Ascending aorta (tissue), 2 donors: ENCODE measurements at regions of chr11 and their contacts with region 1.

Region 1: GRCh38 chr11:18706330-18707243 is 8.0 kb downstream of the TMEM86A start:
- DNase-seq: peak in 1 of 2 donors; percentile 84
- H3K4me3 ChIP-seq: peak overlapping the region; percentile 48 to 70
- H3K27ac ChIP-seq: peak overlapping the region; percentile 79 to 88
- H3K4me1 ChIP-seq: no peaks in the 10 kb centered on the region
- H3K27me3 ChIP-seq: no peaks in the 10 kb centered on the region
- CTCF ChIP-seq: no peak

Region 2: DNA sequence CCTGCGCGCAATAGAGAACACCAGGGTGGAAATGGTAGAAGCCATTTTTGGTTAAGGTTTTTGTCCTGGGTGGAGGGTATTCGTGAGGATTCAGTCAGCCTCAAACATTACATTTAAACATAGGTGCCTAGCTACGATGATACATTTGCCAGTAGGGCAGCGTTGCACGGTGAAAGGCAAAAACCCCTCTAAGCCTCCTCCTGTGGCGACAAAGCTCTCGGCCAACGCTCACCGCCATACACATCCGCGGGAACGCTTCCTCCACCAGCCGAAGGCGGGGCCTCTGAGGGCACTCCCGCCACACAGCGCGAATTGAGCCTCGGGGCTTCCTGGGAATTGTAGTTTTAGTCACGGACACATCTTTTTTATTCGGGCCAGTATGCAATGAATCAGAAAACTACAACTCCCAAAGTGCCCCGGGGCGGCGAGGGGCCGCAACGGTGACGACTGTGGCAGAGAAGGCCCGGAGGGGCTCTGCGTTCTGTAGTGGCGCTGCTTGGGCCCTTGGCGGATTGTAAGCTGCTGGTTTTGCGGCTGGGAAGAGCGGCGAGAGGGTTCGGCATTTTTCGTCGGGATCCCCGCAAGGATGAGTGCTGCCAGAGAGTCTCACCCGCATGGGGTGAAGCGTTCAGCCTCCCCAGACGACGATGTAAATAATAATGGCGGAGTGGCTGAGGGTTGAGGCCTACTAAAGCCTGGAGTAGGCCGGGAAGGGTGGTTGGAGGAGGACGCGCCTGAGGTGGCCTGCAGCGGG is 1968.2 kb before region 1 on chr11 and contains the start of gene C11orf58:
- intact Hi-C with region 1: loop called (anchors 10 kb)
- DNase-seq: peak; percentile 94 to 98
- H3K4me3 ChIP-seq: peak within 1 kb of the TSS; percentile 93
- H3K27ac ChIP-seq: peak within 1 kb of the TSS; percentile 95
- H3K4me1 ChIP-seq: peaks cover 4 to 16% of the 10 kb centered on the region in 2 donors
- H3K27me3 ChIP-seq: no peaks in the 10 kb centered on the region
- CTCF ChIP-seq: no peak
- total RNA-seq, gene C11orf58: 40.9 TPM

Region 3: DNA sequence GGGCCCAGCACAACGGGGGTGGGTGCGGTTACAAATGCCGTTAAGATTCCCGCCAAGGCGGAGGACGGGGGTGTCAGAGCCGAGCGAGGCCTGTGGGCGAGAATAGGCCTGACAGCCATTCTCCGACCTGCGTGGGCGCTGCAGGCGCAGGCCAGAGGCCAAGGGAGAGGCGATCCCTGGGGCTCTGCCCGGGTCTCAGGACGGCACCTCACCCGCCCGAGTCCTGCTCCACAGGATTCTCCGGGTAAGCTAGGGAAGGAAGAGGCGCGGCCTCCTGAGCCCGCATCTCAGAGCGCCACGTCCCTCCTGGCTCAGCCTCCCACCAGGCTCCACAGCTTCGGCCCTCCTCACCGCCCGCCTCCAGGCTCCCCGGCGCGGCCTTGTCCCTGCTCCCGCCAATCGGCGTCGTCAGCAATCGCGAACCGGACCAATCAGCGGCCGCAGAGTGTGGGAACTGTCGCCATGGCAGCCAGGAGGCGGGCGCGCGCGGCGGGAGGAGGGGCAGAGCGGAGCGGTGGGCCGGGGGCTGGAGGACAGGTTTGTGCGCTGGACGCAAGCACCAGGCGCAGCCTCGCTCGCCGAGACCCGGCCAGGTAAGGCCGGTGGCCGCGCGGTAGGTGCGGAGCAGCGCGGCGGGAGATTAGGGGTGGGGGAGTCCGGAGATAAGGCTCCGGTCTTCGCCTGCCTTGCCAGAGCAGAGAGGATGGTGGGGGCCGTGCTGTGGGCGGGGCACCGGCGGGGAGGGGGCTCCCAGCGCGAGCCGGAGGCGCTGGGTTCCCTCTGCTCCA is 1430.2 kb before region 1 on chr11 and contains the start of gene NUCB2:
- intact Hi-C with region 1: loop called (anchors 5 kb)
- DNase-seq: peak; percentile 88 to 97
- H3K4me3 ChIP-seq: peak within 1 kb of the TSS; percentile 78 to 85
- H3K27ac ChIP-seq: peak within 1 kb of the TSS; percentile 86 to 92
- H3K4me1 ChIP-seq: peaks cover 0 to 5% of the 10 kb centered on the region in 2 donors
- H3K27me3 ChIP-seq: no peaks in the 10 kb centered on the region
- CTCF ChIP-seq: no peak
- total RNA-seq, gene NUCB2: 47.8 TPM

Region 4: DNA sequence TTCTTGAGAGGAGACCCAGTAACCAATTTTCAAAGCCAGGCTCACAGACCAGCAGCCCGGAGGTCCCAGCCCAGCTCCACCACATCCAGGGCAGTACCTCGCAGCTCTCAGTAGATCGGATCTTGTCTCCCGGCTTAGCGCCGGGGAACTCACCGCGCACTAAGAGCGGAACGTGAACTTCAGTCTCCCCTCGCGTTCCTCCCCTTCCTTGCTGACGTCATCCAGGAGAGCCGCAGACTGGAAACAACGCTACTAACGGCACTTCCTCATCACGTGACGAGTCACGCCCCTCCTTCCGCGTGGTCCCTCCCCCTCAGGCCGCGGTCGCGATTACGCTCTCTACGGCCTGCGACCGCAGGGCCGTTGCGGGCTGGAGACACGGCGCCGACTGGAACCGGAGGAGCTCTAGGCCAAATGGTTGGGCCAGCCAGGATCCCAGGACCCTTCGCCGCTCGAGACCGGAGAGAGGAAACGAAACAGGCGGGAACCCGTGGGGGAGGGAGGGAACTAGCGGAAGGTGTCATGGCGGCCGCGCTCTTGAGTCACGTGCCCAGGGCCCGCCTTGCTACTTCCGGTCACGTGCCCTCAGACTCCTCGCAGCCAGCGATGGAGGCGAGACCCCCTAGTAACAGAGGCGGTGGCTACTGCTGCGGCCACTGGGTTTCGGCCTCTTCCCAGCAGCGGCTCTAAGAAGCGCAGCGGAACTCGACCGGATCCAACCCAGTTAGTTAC is 384.4 kb before region 1 on chr11 and contains the starts of genes GTF2H1 and HPS5:
- intact Hi-C with region 1: loop called (anchors 10 kb)
- DNase-seq: peak; percentile 87 to 98
- H3K4me3 ChIP-seq: peak within 1 kb of the TSS; percentile 65 to 93
- H3K27ac ChIP-seq: peak within 1 kb of the TSS; percentile 93 to 97
- H3K4me1 ChIP-seq: peaks cover 17 to 29% of the 10 kb centered on the region in 2 donors
- H3K27me3 ChIP-seq: no peaks in the 10 kb centered on the region
- CTCF ChIP-seq: no peak
- total RNA-seq, gene GTF2H1: 33.7 TPM
- total RNA-seq, gene HPS5: 31.7 TPM

Region 5: GRCh38 chr11:18721561-18722292 is 15.1 kb after region 1 on chr11:
- intact Hi-C with region 1: loop called (anchors 1 kb)
- DNase-seq: no peak
- H3K4me3 ChIP-seq: peak overlapping the region; percentile 61 to 72
- H3K27ac ChIP-seq: peak overlapping the region; percentile 75 to 81
- H3K4me1 ChIP-seq: peaks cover 3 to 4% of the 10 kb centered on the region in 2 donors
- H3K27me3 ChIP-seq: no peaks in the 10 kb centered on the region
- CTCF ChIP-seq: peak; percentile 56 to 83 (median 69)

Region 6: DNA sequence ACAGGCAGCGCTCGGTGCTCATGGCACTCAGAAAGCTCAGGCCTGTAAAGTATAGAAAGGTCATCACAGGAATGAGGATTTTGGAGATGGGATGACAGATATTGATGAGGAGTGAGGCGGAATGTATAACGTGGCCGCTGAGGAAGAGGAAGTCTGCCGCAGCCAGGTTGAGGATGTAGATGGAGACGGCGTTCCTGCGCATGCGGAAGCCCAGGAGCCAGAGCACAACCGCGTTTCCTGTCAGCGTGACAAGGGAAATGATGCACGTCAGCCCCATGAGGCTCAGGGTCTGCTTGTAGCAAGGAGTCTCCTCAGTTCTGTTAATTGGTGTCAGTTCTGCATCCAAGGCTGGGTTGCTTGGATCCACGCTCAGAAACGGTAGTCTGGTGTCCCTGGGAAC is 265.7 kb after region 1 on chr11:
- intact Hi-C with region 1: no loop called
- DNase-seq: no peak
- H3K4me3 ChIP-seq: no peak overlapping the region
- H3K27ac ChIP-seq: no peak overlapping the region
- H3K4me1 ChIP-seq: no peaks in the 10 kb centered on the region
- H3K27me3 ChIP-seq: no peaks in the 10 kb centered on the region
- CTCF ChIP-seq: no peak

Region 7: GRCh38 chr11:20363500-20364411 is 1657.2 kb after region 1 on chr11 and contains the start of gene HTATIP2:
- intact Hi-C with region 1: loop called (anchors 10 kb)
- DNase-seq: peak in 1 of 2 donors; percentile 82
- H3K4me3 ChIP-seq: peak within 1 kb of the TSS; percentile 91 to 99
- H3K27ac ChIP-seq: peak within 1 kb of the TSS; percentile 78 to 95
- H3K4me1 ChIP-seq: peaks cover 4 to 14% of the 10 kb centered on the region in 2 donors
- H3K27me3 ChIP-seq: no peaks in the 10 kb centered on the region
- CTCF ChIP-seq: no peak
- total RNA-seq, gene HTATIP2: 34.6 TPM